Body of pancreas (tissue), 4 donors: ENCODE measurements at regions of chr18 and their contacts with region 1.

Region 1: DNA sequence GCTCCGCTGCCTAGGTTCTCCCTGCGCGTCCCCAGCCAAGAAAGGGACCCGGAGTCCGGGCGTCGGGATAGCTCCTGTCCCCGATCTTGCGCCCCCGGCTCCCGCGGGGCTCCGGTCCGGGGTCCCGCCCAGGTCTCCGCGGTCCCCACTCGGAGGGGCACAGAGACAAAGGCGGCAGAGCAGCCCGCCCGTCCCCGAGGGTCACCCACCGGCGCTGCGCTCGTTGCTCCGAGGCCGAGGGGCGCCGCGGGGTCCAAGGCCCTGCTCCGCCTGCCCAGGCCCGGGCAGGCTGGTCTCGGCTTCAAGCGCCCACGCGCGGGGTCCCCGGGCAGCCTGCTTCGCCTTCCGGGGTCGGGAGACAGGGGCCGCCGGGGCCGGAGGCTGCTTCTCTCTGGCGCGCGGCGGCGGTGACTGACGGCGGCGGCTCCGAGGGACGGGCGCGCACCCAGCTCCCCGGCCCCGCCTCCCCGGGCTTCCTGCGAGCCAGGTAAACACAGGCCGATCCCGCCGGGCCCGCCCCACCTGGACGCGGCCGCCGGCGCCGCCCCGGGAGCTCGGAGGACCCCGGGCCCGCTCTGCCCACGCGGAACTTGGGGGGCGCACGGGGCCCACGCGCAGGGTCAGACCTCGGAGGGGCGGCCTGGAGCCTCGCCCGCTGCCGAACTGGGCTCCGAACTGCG is at the start of gene MBP:
- DNase-seq: peak; percentile 87 to 95 (median 91)
- ATAC-seq: peak; percentile 85
- H3K4me3 ChIP-seq: peak within 1 kb of the TSS; percentile 82 to 91
- H3K27ac ChIP-seq: peak within 1 kb of the TSS; percentile 93 to 100 (median 98)
- H3K4me1 ChIP-seq: peaks cover 44% of the 10 kb centered on the region
- H3K27me3 ChIP-seq: no peaks in the 10 kb centered on the region
- CTCF ChIP-seq: peak in 1 of 7 experiments; percentile 1
- POLR2A ChIP-seq: peak; percentile 68 to 97 (median 83)
- total RNA-seq, gene MBP: 17.4 to 24.4 TPM

Region 2: GRCh38 chr18:77071711-77072292 is 60.7 kb before region 1 on chr18:
- intact Hi-C with region 1: loop called (anchors 10 kb)
- DNase-seq: peak; percentile 51 to 73 (median 66)
- ATAC-seq: peak; percentile 65
- H3K4me3 ChIP-seq: no peak overlapping the region
- H3K27ac ChIP-seq: peak overlapping the region in 3 of 4 donors; percentile 30 to 66 (median 44)
- H3K4me1 ChIP-seq: peaks cover 33% of the 10 kb centered on the region
- H3K27me3 ChIP-seq: no peaks in the 10 kb centered on the region
- CTCF ChIP-seq: no peak
- POLR2A ChIP-seq: no peak